ENCODE measurements at regions of chr1 and their contacts with region 1.

Region 1: DNA sequence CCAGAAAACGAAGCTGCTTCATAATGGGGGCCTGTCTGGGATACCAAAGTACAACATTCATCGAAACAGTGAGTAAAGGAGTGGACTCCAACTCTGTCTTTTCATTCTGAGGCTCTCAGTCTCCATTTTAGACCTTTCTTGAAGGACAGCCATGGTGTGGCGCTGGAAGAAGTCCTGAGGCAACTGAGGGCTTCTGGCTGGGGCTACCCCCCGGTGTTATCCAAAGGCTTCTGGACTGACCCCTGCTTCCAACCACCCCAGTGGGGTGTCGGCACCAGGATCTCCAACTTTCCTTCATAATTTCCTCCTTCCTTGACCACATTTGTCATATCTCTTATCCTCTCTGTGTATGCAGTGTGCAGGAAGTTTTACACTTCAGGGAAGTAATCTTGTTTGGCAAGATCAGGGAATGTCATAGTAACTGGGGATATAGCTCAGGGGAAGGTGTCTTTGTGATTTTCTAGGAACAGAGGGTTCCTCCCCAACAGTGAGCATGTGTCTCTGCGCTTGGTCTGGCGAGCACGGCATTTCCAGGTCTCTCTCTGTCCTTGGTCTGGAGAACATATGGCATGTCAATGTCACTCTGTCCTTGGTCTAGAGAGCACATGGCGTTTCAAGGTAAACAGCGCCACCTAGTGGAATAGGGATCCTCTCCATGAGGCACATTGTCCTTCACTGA is 19.4 kb upstream of the BSDC1 start:
- DNase-seq: peak in 4 of 5 donors; percentile 39 to 63 (median 54)
- ATAC-seq: peak; percentile 61 to 76 (median 74)
- H3K4me3 ChIP-seq: no peak overlapping the region
- H3K27ac ChIP-seq: no peak overlapping the region
- H3K4me1 ChIP-seq: no peaks in the 10 kb centered on the region
- H3K27me3 ChIP-seq: no peaks in the 10 kb centered on the region
- CTCF ChIP-seq: peak; percentile 57 to 85 (median 76)
- POLR2A ChIP-seq: no peak

Region 2: DNA sequence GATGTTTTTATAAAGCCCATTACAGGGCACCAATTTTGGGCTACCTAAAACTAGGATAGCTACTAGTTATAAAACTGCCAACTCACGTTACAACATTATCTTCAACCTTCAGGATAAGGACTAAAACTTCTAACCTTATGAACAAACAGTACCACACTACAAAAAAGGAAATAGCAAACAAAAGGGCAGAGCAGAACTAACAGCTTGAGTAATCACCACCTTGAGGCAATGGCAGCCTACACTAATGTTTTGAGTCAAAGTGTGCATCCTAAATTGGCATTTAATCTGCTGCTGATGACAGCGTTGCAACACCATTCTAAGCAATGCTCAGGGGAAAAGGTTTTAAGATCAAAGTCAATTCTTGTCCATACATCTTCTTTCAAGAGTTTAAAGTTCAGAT is 502.7 kb before region 1 on chr1:
- intact Hi-C with region 1: no loop called
- DNase-seq: no peak
- ATAC-seq: peak in 1 of 4 donors; percentile 71
- H3K4me3 ChIP-seq: no peak overlapping the region
- H3K27ac ChIP-seq: peak overlapping the region in 1 of 12 donors; percentile 2
- H3K4me1 ChIP-seq: peaks cover 0 to 42% (median 9%) of the 10 kb centered on the region in 12 donors
- H3K27me3 ChIP-seq: no peaks in the 10 kb centered on the region
- CTCF ChIP-seq: no peak
- POLR2A ChIP-seq: no peak

Region 3: DNA sequence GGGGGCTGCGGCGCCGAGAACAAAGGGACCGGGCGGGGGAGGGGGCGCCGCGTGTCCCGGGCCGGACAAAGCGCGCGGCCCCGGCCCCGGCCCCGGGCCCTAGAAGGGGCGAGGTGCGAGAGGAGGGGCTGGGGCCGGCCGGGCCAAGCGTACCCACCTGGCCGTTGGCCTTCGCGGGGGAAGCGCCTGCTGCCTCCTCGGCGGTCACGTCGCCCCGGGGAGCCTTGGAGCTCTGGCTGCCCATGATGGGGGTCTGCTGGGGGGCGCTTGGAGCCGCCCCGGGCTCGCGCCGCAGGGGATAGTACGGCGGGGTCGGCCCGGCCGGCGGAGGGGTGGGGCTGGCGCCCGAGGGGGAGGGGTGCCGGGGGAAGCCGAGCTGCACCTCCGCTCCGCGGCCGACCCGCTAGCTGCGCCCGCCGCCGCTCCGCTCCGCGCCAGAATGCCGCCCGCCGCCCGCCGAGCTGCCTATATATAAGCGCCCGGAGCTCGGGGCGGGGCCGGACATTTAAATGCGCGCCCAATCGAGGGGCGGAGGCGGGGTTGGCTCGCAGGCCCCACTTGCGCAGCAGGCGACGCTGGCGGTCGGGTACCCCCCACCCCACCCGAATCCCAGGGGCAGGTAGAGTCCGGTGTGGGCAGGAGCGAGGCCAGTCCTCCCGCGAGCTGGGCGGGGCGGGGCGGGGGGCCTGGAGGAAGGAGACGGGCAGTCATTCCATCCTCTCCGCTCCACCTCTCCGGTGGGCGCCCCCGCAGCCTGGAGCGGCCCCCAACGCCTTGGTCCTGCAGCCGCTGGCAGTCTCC is 77.7 kb before region 1 on chr1 and contains the start of gene MARCKSL1:
- intact Hi-C with region 1: loop called in 1 of 10 experiments (anchors 5 kb)
- DNase-seq: peak; percentile 85 to 92 (median 88)
- ATAC-seq: peak; percentile 9 to 76 (median 71)
- H3K4me3 ChIP-seq: peak within 1 kb of the TSS; percentile 62 to 93 (median 72)
- H3K27ac ChIP-seq: peak within 1 kb of the TSS; percentile 43 to 91 (median 73)
- H3K4me1 ChIP-seq: peaks cover 5 to 55% (median 22%) of the 10 kb centered on the region in 12 donors
- H3K27me3 ChIP-seq: peaks cover 0 to 5% (median 0%) of the 10 kb centered on the region in 9 donors
- CTCF ChIP-seq: peak in 1 of 12 donors; percentile 6
- POLR2A ChIP-seq: peak in 1 of 2 donors; percentile 90
- total RNA-seq, gene MARCKSL1: 6.8 to 44.0 (median 12.1) TPM

Region 4: GRCh38 chr1:32400876-32401631 is 12.6 kb before region 1 on chr1:
- intact Hi-C with region 1: loop called in 5 of 10 experiments (anchors 1 to 2 kb)
- DNase-seq: peak; percentile 82 to 92 (median 88)
- ATAC-seq: peak; percentile 93 to 99 (median 98)
- H3K4me3 ChIP-seq: no peak overlapping the region
- H3K27ac ChIP-seq: peak overlapping the region in 10 of 12 donors; percentile 2 to 67 (median 42)
- H3K4me1 ChIP-seq: peaks cover 0 to 12% (median 0%) of the 10 kb centered on the region in 12 donors
- H3K27me3 ChIP-seq: no peaks in the 10 kb centered on the region
- CTCF ChIP-seq: peak; percentile 82 to 96 (median 88)
- POLR2A ChIP-seq: peak in 1 of 2 donors; percentile 12

Measured in heart left ventricle (tissue), 16 donors.